ENCODE measurements at regions of chr9 and their contacts with region 1.

Region 1: GRCh38 chr9:15977438-15977837 is 424.6 kb downstream of the CCDC171 start:
- DNase-seq: no peak
- H3K4me3 Mint-ChIP-seq: no peak overlapping the region
- H3K27ac Mint-ChIP-seq: no peak overlapping the region
- H3K4me1 Mint-ChIP-seq: no peaks in the 10 kb centered on the region
- H3K27me3 Mint-ChIP-seq: no peaks in the 10 kb centered on the region
- CTCF ChIP-seq: no peak

Region 2: GRCh38 chr9:15999422-16000339 is 22.2 kb after region 1 on chr9:
- CTCF ChIA-PET with region 1: no interaction called
- intact Hi-C with region 1: loop called (anchors 2 kb)
- DNase-seq: peak; percentile 2
- H3K4me3 Mint-ChIP-seq: no peak overlapping the region
- H3K27ac Mint-ChIP-seq: no peak overlapping the region
- H3K4me1 Mint-ChIP-seq: peaks cover 33% of the 10 kb centered on the region
- H3K27me3 Mint-ChIP-seq: no peaks in the 10 kb centered on the region
- CTCF ChIP-seq: no peak

Region 3: GRCh38 chr9:16207161-16207560 is 229.7 kb after region 1 on chr9:
- CTCF ChIA-PET with region 1: no interaction called
- intact Hi-C with region 1: no loop called
- DNase-seq: peak; percentile 9
- H3K4me3 Mint-ChIP-seq: no peak overlapping the region
- H3K27ac Mint-ChIP-seq: no peak overlapping the region
- H3K4me1 Mint-ChIP-seq: no peaks in the 10 kb centered on the region
- H3K27me3 Mint-ChIP-seq: no peaks in the 10 kb centered on the region
- CTCF ChIP-seq: no peak

Measured in Calu3 (cell line).